A549 (cell line): ENCODE measurements at regions of chr9 and their contacts with region 1.

Region 1: DNA sequence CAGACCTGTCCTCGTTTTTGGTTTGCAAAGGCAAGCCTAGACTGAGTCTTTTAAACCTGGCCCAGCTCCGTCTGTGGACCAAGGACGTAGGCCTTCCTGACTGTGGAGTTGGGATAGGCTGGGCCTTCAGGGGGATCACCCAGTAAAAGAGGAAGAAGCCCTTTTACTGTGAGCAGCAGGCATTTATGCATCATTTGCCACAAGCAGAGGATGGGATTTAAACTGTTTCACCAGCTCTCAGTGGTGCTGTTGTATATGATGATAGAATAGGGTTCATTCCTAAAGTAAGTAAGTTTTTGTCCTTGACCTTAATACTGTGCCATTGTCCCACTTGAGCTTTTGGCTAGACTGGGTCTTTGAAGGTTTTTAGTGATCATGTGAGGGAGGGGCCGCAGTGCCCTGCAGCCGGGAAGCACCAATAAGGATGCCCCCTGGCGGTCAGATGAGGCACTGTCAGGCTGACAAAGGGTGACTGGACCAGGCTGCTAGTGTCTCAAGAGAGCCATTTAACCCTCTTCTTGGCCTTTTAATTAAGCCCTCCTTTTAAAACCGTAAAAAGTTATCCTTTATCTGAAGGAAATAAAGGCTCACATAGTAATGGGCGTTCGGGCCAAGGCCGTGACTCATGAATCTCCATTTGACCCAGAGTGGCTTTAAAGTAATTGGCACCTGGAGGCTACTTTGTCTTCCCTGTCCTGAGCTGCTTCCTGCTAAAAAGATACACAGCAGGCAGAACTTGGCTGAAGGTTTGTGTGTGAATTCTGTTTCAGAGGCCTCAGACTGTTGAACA is 74.0 kb downstream of the UBAP1 start:
- DNase-seq: peak; percentile 67 to 71
- ATAC-seq: peak; percentile 59 to 76; a peak in 5 of 6 replicates
- H3K4me3 ChIP-seq: no peak overlapping the region
- H3K27ac ChIP-seq: peak overlapping the region; percentile 73 to 76
- H3K4me1 ChIP-seq: peaks cover 38% of the 10 kb centered on the region
- CTCF ChIP-seq: peak; percentile 93
- EP300 ChIP-seq: no peak
- POLR2A ChIP-seq: no peak
- RAD21 ChIP-seq: peak; percentile 61 to 69

Region 2: DNA sequence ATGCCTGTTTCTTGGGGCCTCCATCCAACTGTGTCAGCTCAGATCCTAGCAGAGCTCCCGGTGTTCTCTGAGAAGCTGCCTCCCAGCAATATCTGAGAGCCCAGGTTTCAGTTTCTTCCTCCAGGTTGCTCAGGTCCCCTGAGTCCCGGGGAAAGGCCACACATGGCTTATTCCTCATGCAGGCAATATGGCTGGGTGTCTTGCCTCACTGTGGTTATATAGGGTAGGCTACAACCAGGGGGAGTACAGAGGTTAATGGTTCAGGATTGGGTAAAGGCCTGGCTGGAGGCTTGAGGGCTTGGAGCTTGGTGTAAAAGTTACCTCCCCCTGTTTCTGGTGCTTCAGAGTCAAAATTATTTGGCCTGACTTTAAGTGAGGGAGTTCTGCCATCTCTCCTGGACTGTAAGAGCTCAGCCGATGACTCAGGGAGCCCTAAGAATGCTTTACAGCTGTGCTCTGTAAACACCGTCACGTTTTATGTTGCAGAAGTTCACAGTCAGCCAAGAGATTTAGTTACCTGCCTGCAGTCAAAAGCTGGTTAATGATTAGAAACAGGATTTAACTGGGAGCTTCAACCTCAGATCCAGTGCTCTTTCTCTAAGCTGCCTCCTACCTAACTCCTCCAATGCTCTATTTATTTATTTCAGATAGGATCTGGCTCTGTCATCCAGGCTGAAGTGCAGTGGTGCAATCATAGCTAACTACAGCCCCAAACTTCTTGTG is 179.8 kb before region 1 on chr9:
- CTCF ChIA-PET with region 1: interaction called, 125 read pairs
- POLR2A ChIA-PET with region 1: interaction called, 4 read pairs
- DNase-seq: peak; percentile 87
- ATAC-seq: peak; percentile 85 to 93
- H3K4me3 ChIP-seq: no peak overlapping the region
- H3K27ac ChIP-seq: peak overlapping the region; percentile 61 to 78
- H3K4me1 ChIP-seq: peaks cover 22% of the 10 kb centered on the region
- CTCF ChIP-seq: no peak
- EP300 ChIP-seq: no peak; a peak in 1 of 5 replicates
- POLR2A ChIP-seq: no peak
- RAD21 ChIP-seq: no peak; a peak in 1 of 5 replicates

Region 3: DNA sequence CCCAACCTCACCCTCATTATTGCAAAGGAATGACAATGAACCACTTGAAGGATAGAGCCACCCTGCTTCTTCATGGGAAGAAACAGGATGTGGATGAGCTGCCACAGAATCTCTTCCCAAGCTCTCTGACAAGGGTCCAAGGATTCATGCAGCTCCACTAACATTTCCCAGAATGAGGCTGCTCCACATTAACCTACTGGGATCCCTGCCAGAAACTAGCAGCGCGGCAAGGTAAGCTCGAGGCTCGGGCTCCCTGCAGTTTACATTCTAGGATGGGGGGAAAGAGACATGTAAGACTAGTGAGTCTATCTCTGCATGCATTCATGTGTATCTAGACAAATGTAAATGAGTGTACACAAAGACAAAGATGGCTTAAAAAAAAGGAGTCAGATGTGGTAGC is 138.4 kb before region 1 on chr9:
- CTCF ChIA-PET with region 1: interaction called, 11 read pairs
- POLR2A ChIA-PET with region 1: no interaction called
- DNase-seq: no peak
- ATAC-seq: no peak
- H3K4me3 ChIP-seq: no peak overlapping the region
- H3K27ac ChIP-seq: no peak overlapping the region
- H3K4me1 ChIP-seq: no peaks in the 10 kb centered on the region
- CTCF ChIP-seq: no peak
- EP300 ChIP-seq: no peak
- POLR2A ChIP-seq: no peak
- RAD21 ChIP-seq: no peak

Region 4: GRCh38 chr9:34178520-34179212 is 74.2 kb before region 1 on chr9 and contains the start of gene UBAP1:
- CTCF ChIA-PET with region 1: interaction called, 17 read pairs
- POLR2A ChIA-PET with region 1: interaction called, 9 read pairs
- DNase-seq: peak; percentile 97 to 98
- ATAC-seq: peak; percentile 95 to 99
- H3K4me3 ChIP-seq: peak within 1 kb of the TSS; percentile 88
- H3K27ac ChIP-seq: peak within 1 kb of the TSS; percentile 93 to 94
- H3K4me1 ChIP-seq: peaks cover 13% of the 10 kb centered on the region
- CTCF ChIP-seq: no peak
- EP300 ChIP-seq: no peak
- POLR2A ChIP-seq: peak; percentile 90
- RAD21 ChIP-seq: no peak; a peak in 1 of 5 replicates
- polyA plus RNA-seq, gene UBAP1: 73.1 and 86.7 TPM in 2 replicates

Region 5: GRCh38 chr9:34233672-34234071 is 19.2 kb before region 1 on chr9:
- CTCF ChIA-PET with region 1: interaction called, 118 read pairs
- POLR2A ChIA-PET with region 1: no interaction called
- DNase-seq: no peak
- ATAC-seq: 0 out of 6 replicates have a peak, but pooled peaks of 1 of the 2 experiments have one; percentile 30
- H3K4me3 ChIP-seq: no peak overlapping the region
- H3K27ac ChIP-seq: no peak overlapping the region; a peak in 1 of 6 replicates
- H3K4me1 ChIP-seq: no peaks in the 10 kb centered on the region
- CTCF ChIP-seq: no peak
- EP300 ChIP-seq: no peak
- POLR2A ChIP-seq: no peak
- RAD21 ChIP-seq: no peak

Region 6: DNA sequence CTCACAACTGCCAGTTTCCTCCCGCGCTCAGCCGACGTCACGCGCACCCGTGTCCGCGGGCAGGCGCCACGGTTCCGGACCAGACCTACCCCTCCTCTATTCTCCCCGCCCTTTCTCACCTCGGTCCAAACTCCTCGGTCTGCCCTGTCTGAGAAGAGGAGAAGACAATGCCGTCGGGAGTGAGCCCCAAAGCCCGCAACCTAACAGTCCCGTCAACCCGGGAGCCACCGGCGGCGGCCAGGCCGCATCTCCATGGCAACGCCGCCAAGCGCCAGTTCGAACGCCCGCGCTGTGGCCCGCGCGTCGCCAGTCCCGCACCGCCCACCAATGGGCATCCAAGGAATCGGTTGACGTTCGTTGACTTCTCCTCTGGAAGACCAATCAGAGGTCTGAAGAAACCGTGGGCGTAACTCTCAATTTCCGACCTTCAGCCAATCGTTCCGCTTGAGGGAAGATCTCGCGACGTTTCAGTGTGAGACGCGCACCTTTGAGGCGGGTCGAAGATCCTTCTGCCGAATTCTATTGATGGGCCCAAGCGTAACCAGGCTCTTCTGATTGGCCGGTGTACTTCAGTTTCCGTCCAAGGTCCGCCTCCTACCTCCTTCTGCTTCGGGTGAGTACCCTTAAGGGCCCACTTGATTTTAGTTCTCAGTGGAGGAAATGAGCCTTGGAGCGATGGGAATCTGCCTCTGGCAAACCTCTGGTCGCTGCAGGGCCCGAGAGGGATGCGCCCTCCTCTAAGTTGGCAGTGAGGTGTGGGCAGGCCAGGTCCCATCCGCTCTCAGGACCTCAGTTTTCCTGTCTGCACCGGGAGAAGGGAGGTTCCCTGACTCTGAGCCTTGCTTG is 76.3 kb after region 1 on chr9 and contains the starts of genes KIF24 and NUDT2:
- CTCF ChIA-PET with region 1: interaction called, 16 read pairs
- POLR2A ChIA-PET with region 1: no interaction called
- DNase-seq: peak; percentile 96 to 100
- ATAC-seq: peak; percentile 94 to 97
- H3K4me3 ChIP-seq: peak within 1 kb of the TSS; percentile 97
- H3K27ac ChIP-seq: peak within 1 kb of the TSS; percentile 92 to 95
- H3K4me1 ChIP-seq: peaks cover 20% of the 10 kb centered on the region
- CTCF ChIP-seq: no peak
- EP300 ChIP-seq: no peak
- POLR2A ChIP-seq: peak; percentile 77
- RAD21 ChIP-seq: no peak
- polyA plus RNA-seq, gene KIF24: 4.3 and 4.4 TPM in 2 replicates
- polyA plus RNA-seq, gene NUDT2: 26.4 and 26.8 TPM in 2 replicates